Activated CD4-positive, alpha-beta T cell treated with anti-CD3 and anti-CD28 coated beads for 36 hours (primary cell): ENCODE measurements at regions of chr6 and their contacts with region 1.

Region 1: GRCh38 chr6:73732845-73733675 is 37.1 kb downstream of the CD109 start:
- DNase-seq: peak; percentile 85
- ATAC-seq: peak; percentile 81
- H3K4me3 Mint-ChIP-seq: no peak overlapping the region
- H3K27ac Mint-ChIP-seq: no peak overlapping the region
- H3K4me1 Mint-ChIP-seq: peaks cover 14% of the 10 kb centered on the region
- H3K27me3 Mint-ChIP-seq: no peaks in the 10 kb centered on the region

Region 2: GRCh38 chr6:73675466-73676098 is 57.5 kb before region 1 on chr6:
- CTCF ChIA-PET with region 1: interaction called, 157 read pairs
- POLR2A ChIA-PET with region 1: interaction called, 3 read pairs
- intact Hi-C with region 1: loop called (anchors 1 kb)
- DNase-seq: peak; percentile 85
- ATAC-seq: peak; percentile 96
- H3K4me3 Mint-ChIP-seq: no peak overlapping the region
- H3K27ac Mint-ChIP-seq: no peak overlapping the region
- H3K4me1 Mint-ChIP-seq: peaks cover 1% of the 10 kb centered on the region
- H3K27me3 Mint-ChIP-seq: peaks cover 13% of the 10 kb centered on the region

Region 3: DNA sequence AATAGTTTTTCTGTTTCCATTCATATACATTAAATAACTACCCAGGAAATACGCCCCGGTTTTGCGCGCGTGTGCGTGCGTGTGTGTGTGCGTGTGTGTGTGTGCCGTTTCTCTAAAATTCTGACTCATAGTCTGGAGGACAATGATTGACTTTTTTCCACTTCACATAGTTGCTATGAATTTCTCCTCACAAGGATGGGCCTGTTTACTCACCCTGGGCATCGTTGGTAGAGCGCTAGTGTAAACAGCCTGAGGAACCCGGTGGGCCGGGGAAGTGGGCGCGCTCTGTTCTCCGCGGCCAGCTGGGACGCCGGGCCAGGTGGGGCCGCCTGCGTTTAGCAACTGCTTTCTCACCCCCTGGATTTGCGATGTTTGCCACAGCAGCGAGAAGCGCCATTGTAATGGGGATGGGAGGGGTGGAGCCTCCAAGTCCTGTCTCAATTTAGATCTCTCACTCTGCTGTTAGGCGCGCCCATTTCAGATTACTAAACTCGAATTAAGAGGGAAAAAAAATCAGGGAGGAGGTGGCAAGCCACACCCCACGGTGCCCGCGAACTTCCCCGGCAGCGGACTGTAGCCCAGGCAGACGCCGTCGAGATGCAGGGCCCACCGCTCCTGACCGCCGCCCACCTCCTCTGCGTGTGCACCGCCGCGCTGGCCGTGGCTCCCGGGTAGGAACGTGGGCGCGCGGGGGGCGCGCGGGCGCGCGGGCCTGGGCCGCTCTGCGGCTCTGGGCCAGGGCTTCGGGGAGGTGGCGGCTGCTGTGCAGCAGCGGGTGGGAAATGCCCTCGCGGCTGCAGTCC is 37.2 kb before region 1 on chr6 and contains the start of gene CD109:
- CTCF ChIA-PET with region 1: interaction called, 9 read pairs
- POLR2A ChIA-PET with region 1: no interaction called
- intact Hi-C with region 1: loop called (anchors 1 kb)
- DNase-seq: peak; percentile 88
- ATAC-seq: peak; percentile 86
- H3K4me3 Mint-ChIP-seq: peak within 1 kb of the TSS; percentile 81
- H3K27ac Mint-ChIP-seq: peak within 1 kb of the TSS; percentile 96
- H3K4me1 Mint-ChIP-seq: peaks cover 44% of the 10 kb centered on the region
- H3K27me3 Mint-ChIP-seq: peaks cover 8% of the 10 kb centered on the region
- total RNA-seq, gene CD109: 13.2 to 15.8 TPM

Region 4: DNA sequence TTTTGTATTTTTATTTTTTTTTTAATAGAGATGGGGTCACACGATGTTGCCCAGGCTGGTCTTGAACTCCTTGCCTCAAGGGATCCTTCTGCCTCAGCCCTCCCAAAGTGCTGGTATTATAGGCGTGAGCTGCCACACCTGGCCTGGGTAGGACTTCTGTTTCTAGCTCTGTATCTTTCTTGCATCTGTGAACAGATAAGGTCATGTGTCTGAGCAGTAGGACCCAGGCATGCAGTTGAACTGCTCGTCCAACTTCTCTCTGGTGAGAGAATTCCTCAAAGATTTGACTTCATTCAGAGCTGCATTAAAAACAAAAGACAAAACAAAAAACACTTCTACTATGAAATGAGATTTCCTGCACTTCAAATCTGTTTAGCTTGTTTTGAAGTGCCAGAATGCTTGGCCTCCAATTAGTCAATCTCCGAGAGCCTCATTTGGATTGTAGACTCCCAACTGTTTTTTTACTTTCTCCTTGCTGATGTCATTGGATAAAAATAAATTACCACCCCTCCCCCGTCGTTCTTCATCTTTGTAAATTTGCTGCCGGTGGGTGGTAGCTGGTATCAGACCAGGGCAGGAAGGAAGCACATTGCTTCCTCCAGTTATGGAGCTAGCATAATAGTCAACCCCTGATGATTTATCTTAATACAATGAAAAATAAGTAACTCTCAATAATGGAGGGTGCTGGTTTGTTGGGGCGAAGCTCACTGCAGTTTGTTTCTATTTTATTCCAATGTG is 19.5 kb before region 1 on chr6:
- CTCF ChIA-PET with region 1: interaction called, 10 read pairs
- POLR2A ChIA-PET with region 1: no interaction called
- intact Hi-C with region 1: no loop called
- DNase-seq: no peak
- ATAC-seq: peak; percentile 70
- H3K4me3 Mint-ChIP-seq: no peak overlapping the region
- H3K27ac Mint-ChIP-seq: peak overlapping the region; percentile 26
- H3K4me1 Mint-ChIP-seq: peaks cover 27% of the 10 kb centered on the region
- H3K27me3 Mint-ChIP-seq: no peaks in the 10 kb centered on the region

Region 5: DNA sequence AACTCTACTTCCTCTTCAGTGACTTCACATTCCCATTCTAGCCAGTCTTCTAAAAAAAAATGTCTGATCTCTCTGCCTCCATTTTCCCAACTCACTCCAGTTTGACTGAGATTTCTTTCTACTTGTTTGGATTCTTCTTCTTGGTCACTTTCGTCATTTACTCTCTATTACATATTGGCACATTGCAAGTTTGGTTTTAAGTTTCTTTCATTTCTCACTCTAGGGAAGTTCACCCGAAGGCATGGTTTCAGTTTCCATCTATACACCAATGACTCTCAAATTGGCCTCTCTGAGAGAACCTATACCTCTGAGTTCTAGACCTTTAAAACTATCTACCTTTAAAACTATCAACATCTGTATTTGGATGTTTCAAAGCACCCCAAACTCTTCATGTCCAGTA is 14.2 kb after region 1 on chr6:
- CTCF ChIA-PET with region 1: interaction called, 21 read pairs
- POLR2A ChIA-PET with region 1: no interaction called
- intact Hi-C with region 1: no loop called
- DNase-seq: no peak
- ATAC-seq: peak; percentile 94
- H3K4me3 Mint-ChIP-seq: no peak overlapping the region
- H3K27ac Mint-ChIP-seq: no peak overlapping the region
- H3K4me1 Mint-ChIP-seq: no peaks in the 10 kb centered on the region
- H3K27me3 Mint-ChIP-seq: no peaks in the 10 kb centered on the region